Caco-2 (cell line): ENCODE measurements at regions of chr11 and their contacts with region 1.

Region 1: DNA sequence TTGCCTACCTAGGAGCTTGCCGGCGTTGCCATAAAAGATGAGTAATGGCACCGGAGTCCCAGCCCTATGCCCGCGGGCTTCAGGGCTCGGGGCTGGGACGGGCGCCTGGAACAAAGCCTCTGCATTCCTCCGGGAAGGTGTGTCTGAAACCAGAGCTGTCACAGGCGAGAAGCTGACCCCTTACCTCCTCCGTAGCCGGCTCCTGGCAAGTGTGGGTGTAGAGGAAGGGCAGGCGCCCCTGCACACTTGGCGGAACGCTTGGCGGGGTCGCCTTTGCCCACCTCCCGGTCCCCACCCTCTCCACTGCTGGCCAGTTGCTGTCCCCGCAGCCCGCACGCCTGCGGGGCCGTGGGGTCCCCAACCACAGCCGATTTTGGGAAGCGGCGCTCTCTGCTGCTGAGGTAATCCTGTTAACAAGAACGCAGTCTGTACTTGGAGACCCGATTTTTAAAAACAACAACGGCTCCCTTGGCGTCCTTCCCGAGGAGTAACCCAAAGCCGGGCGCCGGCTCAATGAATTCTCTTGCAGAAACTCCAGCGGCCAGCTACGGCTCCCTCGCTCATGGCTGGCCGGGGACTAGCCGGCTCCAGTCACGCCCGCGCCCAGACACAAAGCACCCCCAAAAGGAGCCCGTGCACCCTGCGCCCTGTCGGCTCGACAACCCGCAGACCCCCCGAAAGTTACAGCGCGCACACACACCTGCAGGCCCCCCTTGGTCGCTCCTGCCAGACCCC is 89.2 kb downstream of the PLEKHA7 start:
- DNase-seq: peak; percentile 95 to 96
- H3K4me3 ChIP-seq: peak overlapping the region; percentile 83
- H3K4me3 Mint-ChIP-seq: peak overlapping the region; percentile 95
- H3K27ac Mint-ChIP-seq: peak overlapping the region; percentile 92
- H3K4me1 ChIP-seq: peaks cover 35% of the 10 kb centered on the region
- H3K4me1 Mint-ChIP-seq: peaks cover 46% of the 10 kb centered on the region
- H3K27me3 ChIP-seq: no peaks in the 10 kb centered on the region
- H3K27me3 Mint-ChIP-seq: no peaks in the 10 kb centered on the region
- CTCF ChIP-seq: no peak

Region 2: GRCh38 chr11:16820324-16821092 is 104.5 kb before region 1 on chr11:
- CTCF ChIA-PET with region 1: interaction called, 4 read pairs
- POLR2A ChIA-PET with region 1: no interaction called
- intact Hi-C with region 1: loop called (anchors 1 kb)
- DNase-seq: peak; percentile 79 to 88
- H3K4me3 ChIP-seq: no peak overlapping the region
- H3K4me3 Mint-ChIP-seq: peak overlapping the region; percentile 9
- H3K27ac Mint-ChIP-seq: peak overlapping the region; percentile 58
- H3K4me1 ChIP-seq: peaks cover 26% of the 10 kb centered on the region
- H3K4me1 Mint-ChIP-seq: peaks cover 26% of the 10 kb centered on the region
- H3K27me3 ChIP-seq: no peaks in the 10 kb centered on the region
- H3K27me3 Mint-ChIP-seq: no peaks in the 10 kb centered on the region
- CTCF ChIP-seq: peak; percentile 83 to 91

Region 3: GRCh38 chr11:16893456-16894066 is 31.4 kb before region 1 on chr11:
- CTCF ChIA-PET with region 1: interaction called, 3 read pairs
- POLR2A ChIA-PET with region 1: no interaction called
- intact Hi-C with region 1: loop called (anchors 1 kb)
- DNase-seq: peak; percentile 85 to 87
- H3K4me3 ChIP-seq: peak overlapping the region; percentile 9; the same call in 1 of the 2 replicates
- H3K4me3 Mint-ChIP-seq: peak overlapping the region; percentile 59
- H3K27ac Mint-ChIP-seq: peak overlapping the region; percentile 81
- H3K4me1 ChIP-seq: peaks cover 67% of the 10 kb centered on the region
- H3K4me1 Mint-ChIP-seq: peaks cover 73% of the 10 kb centered on the region
- H3K27me3 ChIP-seq: no peaks in the 10 kb centered on the region
- H3K27me3 Mint-ChIP-seq: no peaks in the 10 kb centered on the region
- CTCF ChIP-seq: peak in 1 of 2 experiments; percentile 14

Region 4: DNA sequence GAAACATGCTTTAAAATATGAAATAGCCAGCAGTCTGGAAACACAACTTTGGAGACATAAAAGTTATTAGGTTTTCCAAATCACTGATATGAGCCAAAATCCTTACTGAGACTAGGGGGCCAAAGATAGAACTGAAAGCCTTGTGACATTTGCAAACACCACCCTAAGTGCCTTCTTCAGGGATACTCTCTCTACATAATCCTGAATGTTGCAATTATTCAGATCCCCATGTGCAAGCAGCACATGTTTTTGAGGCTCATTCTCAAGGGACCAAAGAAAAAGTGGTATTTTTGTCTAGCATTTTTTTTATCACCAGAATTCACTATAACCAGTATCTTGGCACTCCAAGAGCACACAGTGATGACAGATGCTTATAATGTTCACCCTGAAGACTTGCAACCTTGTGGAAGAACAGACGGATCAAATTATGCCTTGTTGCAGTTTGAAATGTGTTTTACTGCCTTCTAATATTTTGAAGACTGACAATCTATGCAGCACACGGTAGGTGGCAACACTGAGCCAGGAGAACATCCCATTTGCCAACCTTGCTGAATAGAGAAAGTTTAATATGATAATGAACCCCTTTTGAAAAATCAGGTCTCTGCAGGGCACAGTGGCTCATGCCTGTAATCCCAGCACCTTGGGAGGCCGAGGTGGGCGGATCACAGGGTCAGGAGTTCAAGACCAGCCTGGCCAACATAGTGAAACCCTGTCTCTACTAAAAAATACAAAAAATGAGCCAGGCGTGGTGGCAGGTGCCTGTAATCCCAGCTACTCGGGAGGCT is 10.7 kb after region 1 on chr11:
- CTCF ChIA-PET with region 1: interaction called, 4 read pairs
- POLR2A ChIA-PET with region 1: interaction called, 7 read pairs
- intact Hi-C with region 1: loop called (anchors 1 kb)
- DNase-seq: no peak
- H3K4me3 ChIP-seq: no peak overlapping the region
- H3K4me3 Mint-ChIP-seq: no peak overlapping the region
- H3K27ac Mint-ChIP-seq: no peak overlapping the region
- H3K4me1 ChIP-seq: peaks cover 10% of the 10 kb centered on the region
- H3K4me1 Mint-ChIP-seq: peaks cover 12% of the 10 kb centered on the region
- H3K27me3 ChIP-seq: no peaks in the 10 kb centered on the region
- H3K27me3 Mint-ChIP-seq: no peaks in the 10 kb centered on the region
- CTCF ChIP-seq: peak; percentile 29 to 68

Region 5: GRCh38 chr11:17207317-17208258 is 282.6 kb after region 1 on chr11 and contains the start of gene PIK3C2A:
- CTCF ChIA-PET with region 1: no interaction called
- POLR2A ChIA-PET with region 1: interaction called, 3 read pairs
- intact Hi-C with region 1: loop called (anchors 10 kb)
- DNase-seq: peak; percentile 97 to 98
- H3K4me3 ChIP-seq: peak within 1 kb of the TSS; percentile 99
- H3K4me3 Mint-ChIP-seq: peak within 1 kb of the TSS; percentile 98
- H3K27ac Mint-ChIP-seq: peak within 1 kb of the TSS; percentile 100
- H3K4me1 ChIP-seq: peaks cover 23% of the 10 kb centered on the region
- H3K4me1 Mint-ChIP-seq: peaks cover 34% of the 10 kb centered on the region
- H3K27me3 ChIP-seq: no peaks in the 10 kb centered on the region
- H3K27me3 Mint-ChIP-seq: no peaks in the 10 kb centered on the region
- CTCF ChIP-seq: no peak
- total RNA-seq, gene PIK3C2A: 138 and 140 TPM in 2 replicates